Heart left ventricle (tissue), 16 donors: ENCODE measurements at regions of chr20 and their contacts with region 1.

Region 1: GRCh38 chr20:53061192-53062108 is 89.3 kb downstream of the TSHZ2 start:
- DNase-seq: no peak
- ATAC-seq: no peak
- H3K4me3 ChIP-seq: no peak overlapping the region
- H3K27ac ChIP-seq: no peak overlapping the region
- H3K4me1 ChIP-seq: no peaks in the 10 kb centered on the region
- H3K27me3 ChIP-seq: no peaks in the 10 kb centered on the region
- CTCF ChIP-seq: no peak
- POLR2A ChIP-seq: no peak

Region 2: DNA sequence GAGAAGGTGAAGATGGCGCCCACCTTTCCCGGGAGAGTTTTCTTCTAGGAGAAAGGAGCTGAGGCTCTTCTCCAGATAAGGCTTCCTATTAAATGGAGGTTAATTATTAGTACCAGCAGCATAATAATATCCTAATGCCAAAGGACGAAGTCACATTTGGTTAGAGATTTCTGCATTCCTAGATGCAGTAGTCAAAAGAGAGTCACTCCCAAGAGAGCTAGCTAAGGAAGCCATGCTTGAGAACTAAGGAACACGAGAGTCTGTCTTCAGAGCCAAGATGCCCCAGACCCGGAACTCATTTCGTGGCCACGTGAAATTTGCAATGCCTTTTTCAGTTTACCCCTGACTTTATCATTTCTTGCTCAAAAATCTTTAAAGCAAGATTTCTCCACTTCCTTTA is 43.4 kb after region 1 on chr20:
- intact Hi-C with region 1: loop called in 1 of 10 experiments (anchors 5 kb)
- DNase-seq: no peak
- ATAC-seq: no peak
- H3K4me3 ChIP-seq: no peak overlapping the region
- H3K27ac ChIP-seq: no peak overlapping the region
- H3K4me1 ChIP-seq: peaks cover 0 to 16% (median 6%) of the 10 kb centered on the region in 12 donors
- H3K27me3 ChIP-seq: no peaks in the 10 kb centered on the region
- CTCF ChIP-seq: no peak
- POLR2A ChIP-seq: no peak

Region 3: GRCh38 chr20:53559816-53560215 is 498.4 kb after region 1 on chr20:
- intact Hi-C with region 1: no loop called
- DNase-seq: no peak
- ATAC-seq: no peak
- H3K4me3 ChIP-seq: no peak overlapping the region
- H3K27ac ChIP-seq: no peak overlapping the region
- H3K4me1 ChIP-seq: no peaks in the 10 kb centered on the region
- H3K27me3 ChIP-seq: no peaks in the 10 kb centered on the region
- CTCF ChIP-seq: no peak
- POLR2A ChIP-seq: no peak